ENCODE measurements at regions of chrX and their contacts with region 1.

Region 1: GRCh38 chrX:6021316-6022091 is 207.2 kb downstream of the NLGN4X start:
- DNase-seq: peak in 4 of 9 experiments; percentile 0 to 22 (median 8)
- ATAC-seq: no peak
- H3K4me3 ChIP-seq: no peak overlapping the region
- H3K4me3 Mint-ChIP-seq: no peak overlapping the region
- H3K27ac ChIP-seq: no peak overlapping the region
- H3K27ac Mint-ChIP-seq: no peak overlapping the region
- H3K4me1 ChIP-seq: no peaks in the 10 kb centered on the region
- H3K4me1 Mint-ChIP-seq: no peaks in the 10 kb centered on the region
- H3K27me3 ChIP-seq: no peaks in the 10 kb centered on the region
- H3K27me3 Mint-ChIP-seq: no peaks in the 10 kb centered on the region
- CTCF ChIP-seq: no peak

Region 2: GRCh38 chrX:5726224-5726623 is 295.3 kb before region 1 on chrX:
- CTCF ChIA-PET with region 1: no interaction called
- POLR2A ChIA-PET with region 1: no interaction called
- intact Hi-C with region 1: no loop called
- DNase-seq: peak in 1 of 9 experiments; percentile 2
- ATAC-seq: no peak
- H3K4me3 ChIP-seq: no peak overlapping the region
- H3K4me3 Mint-ChIP-seq: no peak overlapping the region
- H3K27ac ChIP-seq: no peak overlapping the region
- H3K27ac Mint-ChIP-seq: no peak overlapping the region
- H3K4me1 ChIP-seq: no peaks in the 10 kb centered on the region
- H3K4me1 Mint-ChIP-seq: no peaks in the 10 kb centered on the region
- H3K27me3 ChIP-seq: no peaks in the 10 kb centered on the region
- H3K27me3 Mint-ChIP-seq: no peaks in the 10 kb centered on the region
- CTCF ChIP-seq: no peak

Region 3: DNA sequence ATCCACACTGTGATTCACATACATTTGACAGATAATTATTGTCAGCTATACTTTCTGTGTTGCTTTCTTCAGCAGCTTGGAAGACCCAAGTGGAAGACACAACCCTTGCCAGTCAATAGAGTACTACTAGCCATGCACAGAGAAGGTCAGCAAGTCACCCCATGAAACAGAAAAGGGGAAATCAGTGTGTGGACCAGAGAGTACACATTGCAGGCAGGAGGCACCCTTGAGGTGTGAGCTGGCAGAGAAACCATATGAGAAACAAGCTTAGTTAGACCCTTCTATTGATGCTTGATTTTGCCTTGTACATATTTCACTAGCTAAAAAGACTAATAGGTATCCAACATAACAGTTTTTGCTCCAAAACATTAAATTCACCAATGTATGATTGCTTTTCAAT is 107.7 kb after region 1 on chrX:
- CTCF ChIA-PET with region 1: no interaction called
- POLR2A ChIA-PET with region 1: no interaction called
- intact Hi-C with region 1: no loop called
- DNase-seq: no peak
- ATAC-seq: no peak
- H3K4me3 ChIP-seq: no peak overlapping the region
- H3K4me3 Mint-ChIP-seq: no peak overlapping the region
- H3K27ac ChIP-seq: no peak overlapping the region
- H3K27ac Mint-ChIP-seq: no peak overlapping the region
- H3K4me1 ChIP-seq: no peaks in the 10 kb centered on the region
- H3K4me1 Mint-ChIP-seq: no peaks in the 10 kb centered on the region
- H3K27me3 ChIP-seq: no peaks in the 10 kb centered on the region
- H3K27me3 Mint-ChIP-seq: no peaks in the 10 kb centered on the region
- CTCF ChIP-seq: no peak

Region 4: DNA sequence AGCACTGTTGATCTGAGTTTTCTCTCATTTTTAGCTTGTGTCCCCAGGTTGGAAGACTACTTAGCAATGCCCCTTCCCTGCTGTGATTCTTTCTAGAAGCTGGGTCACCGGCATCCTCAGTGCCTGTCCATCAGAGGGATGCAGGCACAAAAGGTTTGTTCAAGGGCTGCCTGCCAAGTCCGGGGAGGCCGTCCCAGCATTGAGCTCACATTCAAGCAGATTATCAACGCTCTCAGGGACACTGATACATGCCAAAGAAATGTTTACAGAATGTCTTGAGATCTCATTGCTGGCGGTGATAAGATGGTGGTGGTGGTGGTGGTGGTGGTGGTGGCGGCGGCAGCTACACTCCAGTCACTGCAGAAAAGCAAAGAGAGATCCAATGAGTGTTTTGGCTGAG is 593.0 kb after region 1 on chrX:
- CTCF ChIA-PET with region 1: no interaction called
- POLR2A ChIA-PET with region 1: no interaction called
- intact Hi-C with region 1: no loop called
- DNase-seq: no peak
- ATAC-seq: no peak
- H3K4me3 ChIP-seq: no peak overlapping the region
- H3K4me3 Mint-ChIP-seq: no peak overlapping the region
- H3K27ac ChIP-seq: no peak overlapping the region
- H3K27ac Mint-ChIP-seq: no peak overlapping the region
- H3K4me1 ChIP-seq: no peaks in the 10 kb centered on the region
- H3K4me1 Mint-ChIP-seq: no peaks in the 10 kb centered on the region
- H3K27me3 ChIP-seq: no peaks in the 10 kb centered on the region
- H3K27me3 Mint-ChIP-seq: no peaks in the 10 kb centered on the region
- CTCF ChIP-seq: no peak

Region 5: GRCh38 chrX:7088968-7089615 is 1067.6 kb after region 1 on chrX:
- CTCF ChIA-PET with region 1: no interaction called
- POLR2A ChIA-PET with region 1: no interaction called
- intact Hi-C with region 1: loop called in 1 of 2 experiments (anchors 2 kb)
- DNase-seq: peak in 7 of 9 experiments; percentile 18 to 68 (median 50)
- ATAC-seq: peak; percentile 53
- H3K4me3 ChIP-seq: no peak overlapping the region
- H3K4me3 Mint-ChIP-seq: no peak overlapping the region
- H3K27ac ChIP-seq: no peak overlapping the region
- H3K27ac Mint-ChIP-seq: peak overlapping the region; percentile 86
- H3K4me1 ChIP-seq: peaks cover 23% of the 10 kb centered on the region
- H3K4me1 Mint-ChIP-seq: peaks cover 52% of the 10 kb centered on the region
- H3K27me3 ChIP-seq: no peaks in the 10 kb centered on the region
- H3K27me3 Mint-ChIP-seq: no peaks in the 10 kb centered on the region
- CTCF ChIP-seq: peak; percentile 28

Region 6: DNA sequence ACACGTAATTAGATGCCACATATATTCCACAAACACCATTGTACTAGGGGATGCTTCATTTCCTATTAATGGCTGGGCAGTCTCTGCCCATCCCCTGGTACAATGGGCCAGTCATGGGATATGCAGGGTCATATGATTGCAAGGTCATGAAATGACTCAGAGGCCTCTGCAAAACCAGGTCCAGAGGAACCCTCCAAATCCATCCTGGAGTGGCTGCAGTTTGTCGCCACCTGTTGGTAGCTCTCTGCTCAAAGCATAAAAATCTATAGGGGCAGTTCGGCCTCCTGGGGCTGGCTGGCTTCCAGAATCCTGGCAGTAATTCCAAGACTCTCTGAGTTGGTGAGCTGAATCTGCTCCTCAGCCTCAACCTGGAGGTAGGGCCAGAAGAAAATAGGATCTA is 1149.4 kb after region 1 on chrX:
- CTCF ChIA-PET with region 1: no interaction called
- POLR2A ChIA-PET with region 1: no interaction called
- intact Hi-C with region 1: loop called in 1 of 2 experiments (anchors 5 kb)
- DNase-seq: peak in 8 of 9 experiments; percentile 7 to 62 (median 32)
- ATAC-seq: no peak
- H3K4me3 ChIP-seq: no peak overlapping the region
- H3K4me3 Mint-ChIP-seq: no peak overlapping the region
- H3K27ac ChIP-seq: no peak overlapping the region
- H3K27ac Mint-ChIP-seq: no peak overlapping the region
- H3K4me1 ChIP-seq: no peaks in the 10 kb centered on the region
- H3K4me1 Mint-ChIP-seq: no peaks in the 10 kb centered on the region
- H3K27me3 ChIP-seq: no peaks in the 10 kb centered on the region
- H3K27me3 Mint-ChIP-seq: no peaks in the 10 kb centered on the region
- CTCF ChIP-seq: peak; percentile 28

Region 7: DNA sequence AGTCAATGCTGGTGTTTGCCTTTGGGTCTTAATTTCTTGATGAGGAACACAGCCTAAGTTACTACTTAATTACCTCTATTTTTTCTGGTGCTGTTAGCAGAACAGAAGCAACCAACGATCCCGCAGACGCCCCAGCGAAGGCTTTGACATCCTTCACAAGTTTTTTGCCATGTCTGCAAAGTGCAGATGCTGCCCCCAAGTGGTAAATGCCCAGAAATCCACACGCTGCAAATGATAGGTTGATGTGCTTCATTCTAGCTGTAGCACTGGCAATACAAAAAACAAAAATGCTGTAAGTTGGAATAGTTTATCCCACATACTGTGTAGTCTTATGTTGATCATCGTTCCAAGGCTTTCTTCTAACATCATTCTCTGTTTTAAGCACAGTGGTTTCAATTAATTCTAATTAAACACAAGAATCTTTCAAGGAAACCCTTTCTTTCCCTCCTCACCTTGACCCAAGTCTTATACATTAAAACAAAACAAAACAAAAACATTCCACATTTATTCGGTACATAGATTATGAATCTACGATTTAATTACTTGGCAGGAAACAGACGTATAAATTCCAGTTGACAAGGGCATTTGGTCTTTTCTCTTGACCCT is 1904.5 kb after region 1 on chrX:
- CTCF ChIA-PET with region 1: no interaction called
- POLR2A ChIA-PET with region 1: no interaction called
- intact Hi-C with region 1: loop called in 1 of 2 experiments (anchors 5 kb)
- DNase-seq: peak; percentile 20 to 77 (median 63)
- ATAC-seq: peak; percentile 50
- H3K4me3 ChIP-seq: no peak overlapping the region
- H3K4me3 Mint-ChIP-seq: peak overlapping the region; percentile 90
- H3K27ac ChIP-seq: no peak overlapping the region
- H3K27ac Mint-ChIP-seq: no peak overlapping the region
- H3K4me1 ChIP-seq: peaks cover 8% of the 10 kb centered on the region
- H3K4me1 Mint-ChIP-seq: peaks cover 17% of the 10 kb centered on the region
- H3K27me3 ChIP-seq: no peaks in the 10 kb centered on the region
- H3K27me3 Mint-ChIP-seq: no peaks in the 10 kb centered on the region
- CTCF ChIP-seq: peak; percentile 59

Measured in CD8-positive, alpha-beta T cell (primary cell).